ENCODE measurements at regions of chr16 and their contacts with region 1.

Region 1: GRCh38 chr16:88737298-88738150 is 31.2 kb downstream of the CTU2 start:
- DNase-seq: peak; percentile 85 to 92 (median 89)
- H3K4me3 ChIP-seq: no peak overlapping the region
- H3K27ac ChIP-seq: no peak overlapping the region
- H3K4me1 ChIP-seq: peaks cover 0 to 7% (median 0%) of the 10 kb centered on the region in 3 donors
- H3K27me3 ChIP-seq: no peaks in the 10 kb centered on the region
- CTCF ChIP-seq: peak; percentile 97

Region 2: GRCh38 chr16:88505405-88506082 is 232.0 kb before region 1 on chr16:
- intact Hi-C with region 1: no loop called
- DNase-seq: peak in 4 of 5 donors; percentile 60 to 87 (median 70)
- H3K4me3 ChIP-seq: no peak overlapping the region
- H3K27ac ChIP-seq: no peak overlapping the region
- H3K4me1 ChIP-seq: peaks cover 0 to 9% (median 0%) of the 10 kb centered on the region in 3 donors
- H3K27me3 ChIP-seq: no peaks in the 10 kb centered on the region
- CTCF ChIP-seq: peak; percentile 12

Region 3: GRCh38 chr16:88784074-88784855 is 46.7 kb after region 1 on chr16:
- intact Hi-C with region 1: loop called (anchors 5 kb)
- DNase-seq: peak in 4 of 5 donors; percentile 69 to 93 (median 80)
- H3K4me3 ChIP-seq: peak overlapping the region; percentile 20 to 61 (median 34)
- H3K27ac ChIP-seq: peak overlapping the region; percentile 88 to 89
- H3K4me1 ChIP-seq: peaks cover 0 to 32% (median 15%) of the 10 kb centered on the region in 3 donors
- H3K27me3 ChIP-seq: no peaks in the 10 kb centered on the region
- CTCF ChIP-seq: peak; percentile 26

Measured in kidney (tissue), 22 donors.